PC-3 (cell line): ENCODE measurements at regions of chr9 and their contacts with region 1.

Region 1: GRCh38 chr9:89549031-89549644 is 51.2 kb upstream of the SEMA4D start:
- DNase-seq: peak; percentile 64
- ATAC-seq: peak; percentile 95
- H3K4me3 ChIP-seq: no peak overlapping the region
- H3K27ac ChIP-seq: no peak overlapping the region
- H3K4me1 ChIP-seq: no peaks in the 10 kb centered on the region
- H3K27me3 ChIP-seq: no peaks in the 10 kb centered on the region
- CTCF ChIP-seq: peak; percentile 85

Region 2: DNA sequence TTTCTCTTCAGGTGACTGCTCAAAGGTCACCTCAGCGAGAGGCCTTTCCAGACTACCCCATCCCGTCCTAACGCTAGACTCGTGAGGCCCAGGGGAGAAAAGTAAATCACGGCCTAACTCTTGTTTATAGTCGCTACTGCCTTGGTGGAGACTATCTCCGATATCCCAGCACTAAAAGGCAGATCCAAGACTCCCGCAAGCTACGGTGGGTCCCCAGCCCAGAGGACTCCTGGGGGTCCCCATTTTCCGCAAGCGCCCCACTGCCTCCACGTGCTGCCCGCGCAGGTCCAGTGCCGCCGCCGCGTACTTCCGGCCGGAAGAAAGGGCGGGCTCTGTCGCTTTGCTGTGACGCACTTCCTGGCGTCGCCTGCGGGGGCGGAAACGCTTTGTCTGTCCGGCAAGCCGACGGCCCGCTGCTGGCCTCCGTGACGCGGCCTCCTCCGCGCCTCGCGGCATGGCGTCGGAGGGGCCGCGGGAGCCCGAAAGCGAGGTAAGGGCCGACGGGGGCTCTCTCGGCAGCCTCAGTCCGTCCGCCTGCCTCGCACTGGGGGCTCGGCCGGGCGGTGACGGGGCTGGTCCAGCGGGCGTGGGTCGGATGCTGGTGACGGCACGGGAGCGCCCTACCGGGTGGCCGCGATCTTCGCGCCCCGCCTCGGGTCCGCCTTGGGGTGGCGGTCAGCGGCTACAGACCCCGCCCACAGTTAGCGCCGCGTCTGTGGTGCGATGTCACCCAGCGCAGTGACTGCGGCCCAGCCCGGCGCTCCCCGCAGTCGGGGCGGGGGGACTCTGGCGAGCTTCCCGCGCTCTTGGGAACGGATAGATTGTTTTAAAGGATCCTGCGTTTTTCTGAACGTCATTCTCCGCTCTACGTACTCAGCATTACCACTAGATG is 230.8 kb before region 1 on chr9 and contains the start of gene SECISBP2:
- CTCF ChIA-PET with region 1: no interaction called
- POLR2A ChIA-PET with region 1: no interaction called
- intact Hi-C with region 1: loop called (anchors 2 kb)
- DNase-seq: peak; percentile 91
- ATAC-seq: peak; percentile 95
- H3K4me3 ChIP-seq: peak within 1 kb of the TSS; percentile 74
- H3K27ac ChIP-seq: peak within 1 kb of the TSS; percentile 96
- H3K4me1 ChIP-seq: peaks cover 37% of the 10 kb centered on the region
- H3K27me3 ChIP-seq: no peaks in the 10 kb centered on the region
- CTCF ChIP-seq: peak; percentile 76
- total RNA-seq, gene SECISBP2: 14.4 and 15.7 TPM in 2 replicates

Region 3: GRCh38 chr9:89410641-89411350 is 138.3 kb before region 1 on chr9:
- CTCF ChIA-PET with region 1: interaction called, 10 read pairs
- POLR2A ChIA-PET with region 1: no interaction called
- intact Hi-C with region 1: loop called (anchors 1 kb)
- DNase-seq: peak; percentile 22
- ATAC-seq: peak; percentile 30; the same call in 1 of the 2 replicates
- H3K4me3 ChIP-seq: no peak overlapping the region
- H3K27ac ChIP-seq: no peak overlapping the region
- H3K4me1 ChIP-seq: no peaks in the 10 kb centered on the region
- H3K27me3 ChIP-seq: no peaks in the 10 kb centered on the region
- CTCF ChIP-seq: peak; percentile 43

Region 4: GRCh38 chr9:89477811-89478630 is 71.1 kb before region 1 on chr9:
- CTCF ChIA-PET with region 1: no interaction called
- POLR2A ChIA-PET with region 1: no interaction called
- intact Hi-C with region 1: loop called (anchors 5 kb)
- DNase-seq: peak; percentile 71
- ATAC-seq: peak; percentile 91
- H3K4me3 ChIP-seq: peak overlapping the region; percentile 26
- H3K27ac ChIP-seq: peak overlapping the region; percentile 69
- H3K4me1 ChIP-seq: peaks cover 22% of the 10 kb centered on the region
- H3K27me3 ChIP-seq: no peaks in the 10 kb centered on the region
- CTCF ChIP-seq: no peak

Region 5: GRCh38 chr9:89513837-89514236 is 35.3 kb before region 1 on chr9:
- CTCF ChIA-PET with region 1: no interaction called
- POLR2A ChIA-PET with region 1: no interaction called
- intact Hi-C with region 1: no loop called
- DNase-seq: no peak
- ATAC-seq: no peak
- H3K4me3 ChIP-seq: no peak overlapping the region
- H3K27ac ChIP-seq: no peak overlapping the region
- H3K4me1 ChIP-seq: no peaks in the 10 kb centered on the region
- H3K27me3 ChIP-seq: peaks cover 15% of the 10 kb centered on the region; the same call in 1 of the 2 replicates
- CTCF ChIP-seq: no peak